MCF 10A (cell line): ENCODE measurements at regions of chr3 and their contacts with region 1.

Region 1: DNA sequence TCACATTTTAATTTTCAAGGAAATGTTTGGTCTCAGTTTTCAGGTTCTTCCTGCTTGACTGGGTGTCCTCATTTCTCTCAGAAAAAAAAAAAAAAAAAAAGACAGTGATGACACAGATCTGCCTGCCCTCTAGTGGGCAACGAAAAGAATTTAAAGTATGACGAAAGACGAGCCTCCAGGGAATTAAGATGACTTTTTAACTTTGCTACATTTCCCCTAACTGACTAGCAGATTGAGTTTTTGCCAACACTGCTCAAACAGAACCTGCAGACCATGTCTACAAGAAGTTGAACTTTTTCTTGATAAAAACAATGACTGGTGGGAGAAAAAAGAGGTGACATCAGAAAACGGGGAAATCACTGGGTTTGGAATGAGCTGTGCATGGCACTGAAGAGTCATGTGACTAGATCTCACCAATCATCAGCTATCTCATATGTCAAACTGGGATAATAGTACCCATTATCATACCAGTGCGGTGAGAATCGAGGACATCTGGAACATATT is 40.8 kb downstream of the EOMES start:
- DNase-seq: peak; percentile 86
- H3K4me3 Mint-ChIP-seq: peak overlapping the region; percentile 74
- H3K27ac Mint-ChIP-seq: no peak overlapping the region
- H3K4me1 Mint-ChIP-seq: peaks cover 23% of the 10 kb centered on the region
- H3K27me3 Mint-ChIP-seq: no peaks in the 10 kb centered on the region
- CTCF ChIP-seq: peak; percentile 66

Region 2: DNA sequence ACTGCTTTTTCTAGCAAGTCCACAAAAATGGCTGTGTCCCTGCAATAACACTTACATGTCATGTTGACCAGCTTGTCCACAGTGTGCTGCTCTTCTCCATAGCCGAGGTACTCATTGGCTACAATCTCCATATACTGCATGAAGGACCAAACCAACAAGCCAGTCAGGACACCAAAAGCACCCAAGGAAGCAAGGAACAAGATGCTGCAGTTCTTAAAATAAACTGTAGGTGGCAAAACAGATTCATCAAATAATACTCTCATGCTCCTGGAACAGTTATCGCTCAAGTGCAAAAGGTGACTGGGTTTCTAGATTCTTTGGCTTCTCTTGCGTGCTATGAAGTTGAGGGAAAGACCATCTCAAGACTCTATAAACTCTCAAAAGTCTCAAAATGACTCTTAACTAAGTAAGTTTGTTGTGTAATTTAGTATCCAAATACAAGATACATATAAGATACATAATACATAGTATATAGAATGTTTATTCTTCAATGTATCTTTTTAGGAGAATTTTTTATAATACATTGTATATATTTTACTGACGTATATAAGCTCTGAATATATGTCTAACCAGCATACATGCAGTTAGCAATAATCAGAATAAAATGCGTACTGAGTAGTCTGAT is 369.1 kb before region 1 on chr3:
- CTCF ChIA-PET with region 1: interaction called, 9 read pairs
- POLR2A ChIA-PET with region 1: interaction called, 3 read pairs
- intact Hi-C with region 1: loop called (anchors 1 kb)
- DNase-seq: peak; percentile 82
- H3K4me3 Mint-ChIP-seq: no peak overlapping the region
- H3K27ac Mint-ChIP-seq: peak overlapping the region; percentile 37
- H3K4me1 Mint-ChIP-seq: peaks cover 13% of the 10 kb centered on the region
- H3K27me3 Mint-ChIP-seq: no peaks in the 10 kb centered on the region
- CTCF ChIP-seq: peak; percentile 62

Region 3: DNA sequence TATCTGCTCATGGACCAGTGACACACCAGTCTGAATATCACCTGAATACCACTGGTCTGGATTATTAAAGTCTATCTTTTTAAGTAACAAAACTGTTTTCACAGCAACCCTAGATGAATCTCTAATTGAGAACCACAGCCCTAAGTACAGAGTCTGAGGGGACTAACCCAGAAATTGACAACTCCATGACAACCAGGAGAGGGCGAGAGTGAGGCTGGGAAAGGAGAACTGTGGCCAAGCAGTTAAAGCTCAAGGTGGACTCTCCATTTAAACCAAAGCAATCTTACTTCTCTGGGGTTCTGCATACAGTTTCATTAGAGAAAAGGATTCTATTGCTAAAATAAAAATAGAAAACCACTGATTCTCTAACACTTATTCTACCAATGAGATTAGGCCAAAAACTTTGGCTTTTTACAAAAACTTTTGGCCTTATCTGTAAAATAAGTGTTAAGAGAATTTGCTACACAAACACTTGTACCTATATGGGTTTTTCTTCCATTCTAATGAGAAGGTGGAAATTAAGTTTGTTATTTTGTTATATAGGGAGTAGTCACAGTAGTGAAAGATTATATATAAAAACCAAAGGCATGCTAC is 323.5 kb before region 1 on chr3:
- CTCF ChIA-PET with region 1: no interaction called
- POLR2A ChIA-PET with region 1: interaction called, 6 read pairs
- intact Hi-C with region 1: loop called (anchors 1 kb)
- DNase-seq: peak; percentile 76
- H3K4me3 Mint-ChIP-seq: no peak overlapping the region
- H3K27ac Mint-ChIP-seq: no peak overlapping the region
- H3K4me1 Mint-ChIP-seq: peaks cover 29% of the 10 kb centered on the region
- H3K27me3 Mint-ChIP-seq: no peaks in the 10 kb centered on the region
- CTCF ChIP-seq: peak; percentile 44

Region 4: DNA sequence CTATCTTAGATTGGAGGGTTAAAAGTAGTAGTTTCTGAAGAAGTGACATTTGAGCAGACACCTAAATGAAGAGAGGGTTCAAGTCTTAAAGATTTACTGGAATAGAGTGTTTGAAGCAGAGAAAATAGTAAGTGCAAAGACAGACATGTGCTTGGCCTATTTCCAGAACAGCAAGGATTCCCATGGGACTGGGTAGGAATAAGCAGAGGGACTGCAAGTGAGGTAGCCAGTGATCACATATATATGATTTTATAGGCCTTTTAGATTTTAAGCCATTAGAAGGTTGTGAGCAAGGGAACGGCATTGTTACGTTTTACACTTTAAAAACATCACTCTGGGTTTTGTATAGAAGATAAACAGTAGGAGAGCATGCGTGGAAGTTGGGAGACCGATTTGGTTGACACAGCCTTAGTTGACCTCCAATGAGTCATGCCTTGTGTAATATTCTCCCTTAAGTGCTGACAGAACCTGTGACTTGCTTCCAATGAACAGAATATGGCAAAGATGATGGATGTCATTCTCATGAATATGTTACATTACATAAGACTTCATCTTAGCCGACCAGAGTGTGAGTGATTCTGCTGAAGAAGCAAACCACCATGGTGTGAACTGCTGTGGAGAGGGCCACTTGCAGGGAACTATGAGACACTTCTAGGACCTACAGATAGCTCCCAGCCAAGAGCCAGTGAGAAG is 160.0 kb before region 1 on chr3:
- CTCF ChIA-PET with region 1: interaction called, 12 read pairs
- POLR2A ChIA-PET with region 1: interaction called, 27 read pairs
- intact Hi-C with region 1: no loop called
- DNase-seq: peak; percentile 96
- H3K4me3 Mint-ChIP-seq: no peak overlapping the region
- H3K27ac Mint-ChIP-seq: peak overlapping the region; percentile 29
- H3K4me1 Mint-ChIP-seq: peaks cover 27% of the 10 kb centered on the region
- H3K27me3 Mint-ChIP-seq: no peaks in the 10 kb centered on the region
- CTCF ChIP-seq: no peak